ENCODE measurements at regions of chr12 and their contacts with region 1.

Region 1: GRCh38 chr12:111174251-111174960 is 194.5 kb downstream of the PHETA1 start:
- DNase-seq: no peak
- H3K4me3 ChIP-seq: no peak overlapping the region
- H3K27ac ChIP-seq: no peak overlapping the region
- H3K4me1 ChIP-seq: peaks cover 0 to 12% (median 10%) of the 10 kb centered on the region in 4 donors
- H3K27me3 ChIP-seq: peaks cover 0 to 24% (median 0%) of the 10 kb centered on the region in 3 donors
- CTCF ChIP-seq: peak in 1 of 4 experiments; percentile 30
- EP300 ChIP-seq: no peak
- POLR2A ChIP-seq: no peak

Region 2: DNA sequence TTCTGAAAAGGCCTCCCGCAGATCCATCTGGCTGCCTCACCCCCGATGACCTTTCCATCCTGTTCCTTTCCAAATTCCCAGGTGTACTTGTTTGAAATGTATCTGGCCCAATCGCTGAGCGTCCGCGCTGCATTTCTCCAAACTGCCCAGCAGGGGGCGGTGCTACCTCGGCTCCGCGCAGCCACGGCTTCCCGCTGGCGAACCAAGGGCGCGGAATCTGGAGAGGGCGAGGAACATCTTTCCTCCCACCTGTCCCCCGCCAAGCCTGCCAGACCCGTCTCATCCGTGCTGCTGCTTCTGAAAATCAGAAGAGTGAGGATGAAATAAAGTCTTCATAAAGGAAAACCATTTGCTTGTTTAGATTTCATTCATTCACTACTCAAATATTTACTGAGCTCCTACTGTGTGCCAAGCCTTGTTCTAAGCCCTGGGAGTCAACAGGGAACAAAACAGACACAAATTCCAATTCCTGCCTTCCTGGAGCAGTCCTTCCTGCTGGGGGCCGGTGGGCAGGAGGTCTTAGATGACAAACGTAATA is 237.2 kb before region 1 on chr12:
- intact Hi-C with region 1: loop called (anchors 2 kb)
- DNase-seq: no peak
- H3K4me3 ChIP-seq: no peak overlapping the region
- H3K27ac ChIP-seq: no peak overlapping the region
- H3K4me1 ChIP-seq: peaks cover 0 to 8% (median 3%) of the 10 kb centered on the region in 4 donors
- H3K27me3 ChIP-seq: peaks cover 0 to 23% (median 3%) of the 10 kb centered on the region in 3 donors
- CTCF ChIP-seq: peak; percentile 54 to 94 (median 78)
- EP300 ChIP-seq: no peak
- POLR2A ChIP-seq: no peak

Region 3: DNA sequence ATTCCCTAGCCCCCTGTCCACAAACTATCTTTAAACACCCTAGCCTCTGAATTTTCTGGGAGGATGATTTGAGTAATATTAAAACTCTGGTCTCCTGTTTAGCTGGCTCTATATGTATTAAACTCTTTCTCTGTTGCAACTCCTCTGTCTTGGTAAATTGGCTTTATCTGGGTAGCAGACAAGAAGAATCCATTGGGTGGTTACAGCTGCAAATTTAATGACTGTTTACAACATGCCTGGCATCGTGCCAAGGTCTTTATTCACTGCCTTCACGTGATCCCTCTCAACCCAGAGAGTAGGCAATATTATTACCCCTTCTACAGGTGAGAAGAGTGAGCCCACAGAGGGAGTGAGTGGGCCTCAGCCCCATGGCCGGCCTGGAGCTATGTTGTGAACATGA is 176.2 kb before region 1 on chr12:
- intact Hi-C with region 1: no loop called
- DNase-seq: no peak
- H3K4me3 ChIP-seq: no peak overlapping the region
- H3K27ac ChIP-seq: no peak overlapping the region
- H3K4me1 ChIP-seq: no peaks in the 10 kb centered on the region
- H3K27me3 ChIP-seq: no peaks in the 10 kb centered on the region
- CTCF ChIP-seq: no peak
- EP300 ChIP-seq: no peak
- POLR2A ChIP-seq: no peak

Region 4: GRCh38 chr12:111024205-111024801 is 150.1 kb before region 1 on chr12:
- intact Hi-C with region 1: loop called (anchors 5 kb)
- DNase-seq: peak; percentile 71
- H3K4me3 ChIP-seq: no peak overlapping the region
- H3K27ac ChIP-seq: no peak overlapping the region
- H3K4me1 ChIP-seq: no peaks in the 10 kb centered on the region
- H3K27me3 ChIP-seq: peaks cover 0 to 70% (median 0%) of the 10 kb centered on the region in 3 donors
- CTCF ChIP-seq: peak; percentile 23 to 77 (median 68)
- EP300 ChIP-seq: no peak
- POLR2A ChIP-seq: no peak

Region 5: DNA sequence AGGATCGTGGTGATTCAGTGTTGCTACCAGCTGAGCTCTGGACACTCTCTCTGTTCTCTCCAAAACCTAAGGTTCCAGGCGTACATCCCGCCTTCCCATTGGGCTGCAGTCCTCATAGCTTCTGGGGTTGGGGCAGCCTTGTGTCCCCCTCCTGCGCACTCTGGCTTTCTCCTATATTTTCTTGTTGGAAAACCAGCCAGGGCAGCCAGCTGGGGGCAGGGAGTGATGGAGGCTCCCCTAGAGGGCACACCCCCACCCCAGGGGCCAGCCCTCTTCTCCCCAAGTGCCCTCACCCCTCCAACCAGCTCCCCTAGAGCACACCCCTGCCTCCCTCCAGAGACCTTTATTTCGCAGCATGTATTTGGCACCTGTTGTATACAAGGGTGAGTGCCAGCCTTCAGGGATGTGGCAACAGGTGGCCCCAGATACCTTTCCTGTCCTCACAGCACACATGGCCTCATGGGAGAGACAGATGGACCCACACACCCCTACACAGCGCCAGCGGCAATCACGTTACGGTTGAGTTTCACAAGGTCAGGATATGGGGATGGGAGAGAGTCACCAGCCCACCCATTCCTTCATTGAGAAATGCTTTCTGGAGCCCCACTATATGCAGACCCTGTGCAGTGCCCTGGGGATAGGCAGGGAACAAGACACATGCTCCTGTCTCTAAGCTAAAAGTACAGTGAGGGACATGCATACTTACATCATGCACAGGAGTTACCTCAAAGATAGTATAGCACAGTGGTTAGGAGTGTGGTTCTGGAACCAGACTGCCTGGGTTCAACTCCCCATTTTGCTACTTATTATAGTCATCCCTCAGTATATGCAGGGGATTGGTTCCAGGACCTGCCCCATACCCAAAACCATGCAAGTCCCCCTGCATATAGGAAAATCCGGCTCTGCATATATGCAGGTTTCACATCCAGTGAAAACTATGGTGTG is 53.3 kb after region 1 on chr12:
- intact Hi-C with region 1: no loop called
- DNase-seq: no peak
- H3K4me3 ChIP-seq: no peak overlapping the region
- H3K27ac ChIP-seq: no peak overlapping the region
- H3K4me1 ChIP-seq: no peaks in the 10 kb centered on the region
- H3K27me3 ChIP-seq: peaks cover 0 to 21% (median 0%) of the 10 kb centered on the region in 3 donors
- CTCF ChIP-seq: no peak
- EP300 ChIP-seq: no peak
- POLR2A ChIP-seq: no peak